ENCODE measurements at regions of chr10 and their contacts with region 1.

Region 1: GRCh38 chr10:30783939-30784500 is 154.5 kb upstream of the LYZL2 start:
- DNase-seq: peak; percentile 78 to 98 (median 92)

Region 2: GRCh38 chr10:31031558-31032257 is 247.7 kb after region 1 on chr10 and contains the start of gene ZNF438:
- intact Hi-C with region 1: loop called (anchors 5 kb)
- DNase-seq: peak; percentile 86 to 99 (median 93)

Region 3: DNA sequence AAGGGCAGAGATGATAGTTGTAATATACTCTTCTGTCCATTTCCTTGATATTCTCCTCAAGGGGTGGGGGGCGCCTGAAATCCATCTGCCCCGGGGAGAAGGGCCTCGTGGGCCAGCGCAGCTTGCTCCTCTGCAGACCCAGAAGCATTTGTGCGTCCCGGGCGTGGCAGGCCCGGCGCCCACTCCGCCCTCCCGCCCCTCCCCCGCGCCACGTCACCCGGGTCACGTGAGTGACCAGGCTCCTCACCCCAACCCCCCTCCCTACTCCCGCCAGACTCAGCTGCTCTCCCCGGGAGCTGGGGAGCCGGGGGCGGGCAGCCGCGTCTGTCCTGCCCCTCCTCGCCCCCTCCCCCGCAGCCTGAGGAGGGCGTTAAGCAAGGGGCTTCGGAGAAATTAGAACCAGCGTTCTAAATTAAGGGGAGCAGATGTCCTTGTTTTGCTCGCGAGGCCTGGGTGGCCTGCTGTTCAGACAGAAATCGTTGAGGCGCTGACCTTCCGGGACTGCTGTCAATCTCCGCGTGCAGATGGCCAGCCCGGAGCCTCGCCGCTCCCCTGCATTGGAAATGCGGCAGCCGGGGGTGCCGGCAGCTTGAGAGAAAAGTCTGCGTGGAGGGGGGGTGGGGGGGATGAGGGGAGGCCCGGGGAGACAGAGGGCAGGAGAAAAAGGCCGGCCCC is 349.7 kb after region 1 on chr10:
- intact Hi-C with region 1: loop called (anchors 2 kb)
- DNase-seq: peak; percentile 64 to 97 (median 78)

Region 4: DNA sequence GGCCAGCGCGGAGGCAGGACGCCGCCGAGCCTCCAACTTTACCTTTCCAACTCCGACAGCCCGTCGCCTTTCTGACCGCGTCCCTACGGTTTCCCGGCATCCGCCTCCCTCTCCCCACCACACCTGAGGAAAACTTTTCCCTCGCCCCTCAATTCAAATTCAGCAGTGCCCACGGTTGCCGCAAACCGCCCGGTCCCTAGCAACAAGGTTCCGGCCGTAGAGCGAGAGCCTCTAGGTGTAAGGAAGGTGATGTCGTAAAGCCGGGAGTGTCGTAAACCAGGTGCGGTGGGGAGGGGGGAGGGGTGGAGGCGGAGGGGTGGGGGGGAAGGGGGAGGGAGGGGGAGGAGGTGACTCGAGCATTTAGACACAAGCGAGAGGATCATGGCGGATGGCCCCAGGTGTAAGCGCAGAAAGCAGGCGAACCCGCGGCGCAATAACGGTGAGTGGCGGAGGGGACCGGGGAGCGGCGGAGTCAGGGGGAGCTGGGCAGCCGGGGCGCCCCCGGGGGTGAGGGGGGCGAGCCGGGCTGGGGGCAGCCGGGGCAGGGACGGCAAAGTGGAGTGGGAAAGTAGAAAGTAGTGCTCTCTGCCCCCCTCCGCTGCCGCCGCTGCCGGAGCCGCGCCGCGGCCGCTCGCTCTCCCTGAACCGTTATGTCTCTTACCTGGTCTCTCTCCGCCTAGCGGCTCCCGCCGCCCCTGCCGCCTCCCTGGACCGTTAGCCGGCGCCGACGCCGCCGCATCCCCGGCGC is 535.0 kb after region 1 on chr10 and contains the start of gene ZEB1:
- intact Hi-C with region 1: loop called (anchors 2 kb)
- DNase-seq: peak; percentile 37 to 93 (median 66)

Region 5: GRCh38 chr10:31759799-31760626 is 976.0 kb after region 1 on chr10:
- intact Hi-C with region 1: loop called (anchors 10 kb)
- DNase-seq: peak; percentile 91 to 99 (median 96)

Region 6: GRCh38 chr10:31808258-31809218 is 1024.5 kb after region 1 on chr10:
- intact Hi-C with region 1: loop called (anchors 2 kb)
- DNase-seq: peak in 2 of 10 donors; percentile 15 to 82

Region 7: DNA sequence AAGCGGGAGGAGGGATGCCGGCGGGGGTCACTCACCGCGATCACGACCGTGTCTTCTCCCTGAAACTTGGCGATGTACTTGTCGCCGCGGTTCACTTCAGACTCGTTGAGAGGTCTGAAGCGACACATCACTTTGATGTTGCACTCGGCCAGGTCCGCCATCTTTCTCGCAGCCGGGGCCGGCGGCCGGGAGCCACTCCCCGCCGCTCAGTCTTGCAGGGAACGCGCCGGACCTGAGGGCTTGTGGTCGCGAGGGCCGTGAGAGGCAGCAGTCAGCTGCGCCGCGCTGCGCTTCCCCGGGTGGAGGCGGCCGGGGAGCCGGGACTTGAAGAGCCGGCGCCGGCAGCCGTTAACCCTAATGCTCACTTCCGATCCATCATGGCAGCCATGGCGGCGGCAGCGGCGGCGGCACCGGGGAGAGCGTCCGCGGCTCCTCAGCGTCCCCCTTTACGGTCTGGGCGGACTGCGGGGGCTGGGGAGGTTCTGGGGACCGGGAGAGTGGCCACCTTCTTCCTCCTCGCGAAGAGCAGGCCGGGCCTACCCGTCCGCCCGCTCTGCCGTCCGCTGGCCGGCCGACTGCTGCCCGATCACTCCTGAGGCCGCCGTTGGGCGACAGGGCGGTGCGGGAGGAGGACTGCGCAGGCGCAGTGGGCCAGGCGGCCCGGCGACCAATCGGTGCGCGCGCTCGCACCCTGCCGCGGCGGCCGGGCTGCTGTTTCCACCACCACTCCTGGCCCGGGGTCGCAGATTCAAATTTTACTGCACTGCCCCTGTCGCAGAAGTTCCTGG is 1272.0 kb after region 1 on chr10 and contains the start of gene KIF5B:
- intact Hi-C with region 1: loop called (anchors 10 kb)
- DNase-seq: peak; percentile 79 to 98 (median 86)